GM23248 (cell line): ENCODE measurements at regions of chr11 and their contacts with region 1.

Region 1: DNA sequence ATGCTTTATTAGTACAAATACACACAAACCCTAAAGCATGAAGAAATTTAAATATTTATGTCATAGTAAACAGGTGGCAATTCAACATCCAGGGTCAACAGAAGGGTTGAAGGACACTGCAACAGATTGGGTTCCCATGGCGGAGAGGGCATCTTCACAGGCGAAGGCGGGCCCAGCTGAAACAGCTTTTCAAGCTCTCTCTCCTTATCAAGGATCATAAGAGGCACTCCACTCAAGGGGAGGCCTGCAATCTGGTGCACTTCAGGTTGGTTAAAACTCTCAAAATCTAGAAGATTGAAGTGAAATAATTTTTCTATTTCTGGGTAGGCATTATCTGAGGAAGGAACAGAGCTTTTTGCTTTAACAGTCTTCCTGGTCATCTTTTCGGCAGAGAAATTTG is 16.8 kb upstream of the SLC22A8 start:
- DNase-seq: no peak
- H3K4me3 ChIP-seq: no peak overlapping the region
- H3K27ac ChIP-seq: no peak overlapping the region
- H3K4me1 ChIP-seq: no peaks in the 10 kb centered on the region
- H3K27me3 ChIP-seq: peaks cover 31% of the 10 kb centered on the region

Region 2: GRCh38 chr11:62875698-62876478 is 156.6 kb before region 1 on chr11:
- in situ Hi-C with region 1: no loop called
- DNase-seq: no peak
- H3K4me3 ChIP-seq: no peak overlapping the region
- H3K27ac ChIP-seq: no peak overlapping the region
- H3K4me1 ChIP-seq: peaks cover 13% of the 10 kb centered on the region
- H3K27me3 ChIP-seq: no peaks in the 10 kb centered on the region

Region 3: GRCh38 chr11:63227521-63228107 is 195.2 kb after region 1 on chr11:
- in situ Hi-C with region 1: loop called (anchors 10 kb)
- DNase-seq: peak; percentile 7
- H3K4me3 ChIP-seq: no peak overlapping the region
- H3K27ac ChIP-seq: no peak overlapping the region
- H3K4me1 ChIP-seq: no peaks in the 10 kb centered on the region
- H3K27me3 ChIP-seq: no peaks in the 10 kb centered on the region